ENCODE measurements at regions of chr5 and their contacts with region 1.

Region 1: DNA sequence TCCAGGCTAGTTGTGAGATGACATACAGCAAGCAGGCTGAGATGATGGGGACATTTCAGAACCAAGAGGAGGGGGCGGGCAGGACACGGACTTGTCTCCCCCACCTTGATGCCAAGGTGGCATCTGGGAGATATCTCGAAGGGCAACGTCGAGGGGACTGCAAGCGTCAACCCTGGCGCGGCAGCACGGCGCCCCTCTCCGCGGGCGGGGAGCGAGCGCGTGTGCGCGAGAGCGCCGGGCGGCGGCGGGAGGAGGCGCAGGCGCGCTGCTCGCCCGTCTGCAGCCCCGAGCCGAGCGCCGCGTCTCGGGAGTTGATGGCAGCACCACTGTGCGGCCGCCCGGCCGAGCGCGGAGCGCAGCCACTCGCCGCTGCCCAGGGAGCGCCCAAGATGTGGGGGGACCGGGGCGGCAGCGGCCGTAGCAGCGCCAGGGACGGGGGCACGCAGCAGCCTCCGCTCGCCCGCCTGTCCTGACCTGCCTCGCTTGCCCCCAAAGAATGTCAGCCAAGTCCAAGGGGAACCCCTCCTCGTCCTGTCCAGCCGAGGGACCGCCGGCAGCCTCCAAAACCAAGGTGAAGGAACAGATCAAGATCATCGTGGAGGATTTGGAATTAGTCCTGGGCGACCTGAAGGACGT is at the start of gene PRR16:
- DNase-seq: peak; percentile 65
- H3K4me3 ChIP-seq: peak within 1 kb of the TSS; percentile 61 to 78 (median 71)
- H3K27ac ChIP-seq: no peak within 1 kb of the TSS
- H3K4me1 ChIP-seq: peaks cover 5% of the 10 kb centered on the region
- H3K27me3 ChIP-seq: no peaks in the 10 kb centered on the region
- CTCF ChIP-seq: no peak
- total RNA-seq, gene PRR16: 1.3 to 3.2 TPM

Region 2: GRCh38 chr5:120640778-120641177 is 176.7 kb after region 1 on chr5:
- CTCF ChIA-PET with region 1: no interaction called
- dilution Hi-C with region 1: no loop called
- in situ Hi-C with region 1: no loop called
- intact Hi-C with region 1: no loop called
- DNase-seq: no peak
- H3K4me3 ChIP-seq: no peak overlapping the region
- H3K27ac ChIP-seq: no peak overlapping the region
- H3K4me1 ChIP-seq: no peaks in the 10 kb centered on the region
- H3K27me3 ChIP-seq: no peaks in the 10 kb centered on the region
- CTCF ChIP-seq: no peak

Region 3: GRCh38 chr5:120684749-120685415 is 220.8 kb after region 1 on chr5:
- CTCF ChIA-PET with region 1: no interaction called
- dilution Hi-C with region 1: no loop called
- in situ Hi-C with region 1: no loop called
- intact Hi-C with region 1: loop called (anchors 2 kb)
- DNase-seq: no peak
- H3K4me3 ChIP-seq: no peak overlapping the region
- H3K27ac ChIP-seq: no peak overlapping the region
- H3K4me1 ChIP-seq: no peaks in the 10 kb centered on the region
- H3K27me3 ChIP-seq: no peaks in the 10 kb centered on the region
- CTCF ChIP-seq: no peak

Region 4: DNA sequence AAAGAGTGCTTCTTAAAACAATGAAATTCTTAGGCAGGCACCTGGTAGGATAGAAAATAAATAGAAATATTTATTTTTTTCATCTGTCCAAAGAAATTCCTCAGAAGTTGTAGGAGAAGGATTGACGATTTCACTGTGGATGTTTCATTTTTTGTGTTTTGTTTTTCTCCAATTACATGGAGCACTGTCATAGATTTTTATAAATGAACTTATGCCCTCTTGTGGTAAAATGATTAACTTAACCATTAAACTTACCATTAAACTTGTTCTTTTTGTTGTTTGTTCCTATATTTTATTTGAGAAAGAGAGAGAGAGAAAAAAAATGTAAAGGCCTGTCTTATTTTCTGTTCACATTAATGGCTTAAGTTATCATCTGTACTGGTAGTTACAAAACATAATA is 339.2 kb after region 1 on chr5:
- CTCF ChIA-PET with region 1: no interaction called
- dilution Hi-C with region 1: no loop called
- in situ Hi-C with region 1: no loop called
- intact Hi-C with region 1: loop called (anchors 2 kb)
- DNase-seq: peak; percentile 2
- H3K4me3 ChIP-seq: no peak overlapping the region
- H3K27ac ChIP-seq: no peak overlapping the region
- H3K4me1 ChIP-seq: no peaks in the 10 kb centered on the region
- H3K27me3 ChIP-seq: peaks cover 2% of the 10 kb centered on the region
- CTCF ChIP-seq: peak in 1 of 2 donors; percentile 29